T-cell (primary cell): ENCODE measurements at regions of chr20 and their contacts with region 1.

Region 1: GRCh38 chr20:36439040-36439730 is 102.1 kb upstream of the MYL9 start:
- DNase-seq: peak in 32 of 35 experiments; percentile 22 to 70 (median 46)
- ATAC-seq: peak in 2 of 4 experiments; percentile 39 to 48
- H3K4me3 ChIP-seq: no peak overlapping the region
- H3K4me3 Mint-ChIP-seq: no peak overlapping the region
- H3K27ac ChIP-seq: no peak overlapping the region
- H3K27ac Mint-ChIP-seq: no peak overlapping the region
- H3K4me1 ChIP-seq: peaks cover 0 to 20% of the 10 kb centered on the region in 2 experiments
- H3K4me1 Mint-ChIP-seq: peaks cover 0 to 4% (median 2%) of the 10 kb centered on the region in 3 donors
- H3K27me3 ChIP-seq: peaks cover 0 to 48% of the 10 kb centered on the region in 2 experiments
- H3K27me3 Mint-ChIP-seq: peaks cover 5 to 6% of the 10 kb centered on the region in 2 donors

Region 2: GRCh38 chr20:35551503-35551902 is 887.7 kb before region 1 on chr20:
- CTCF ChIA-PET with region 1: no interaction called
- POLR2A ChIA-PET with region 1: no interaction called
- DNase-seq: no peak
- ATAC-seq: no peak
- H3K4me3 ChIP-seq: no peak overlapping the region
- H3K4me3 Mint-ChIP-seq: no peak overlapping the region
- H3K27ac ChIP-seq: no peak overlapping the region
- H3K27ac Mint-ChIP-seq: no peak overlapping the region
- H3K4me1 ChIP-seq: no peaks in the 10 kb centered on the region
- H3K4me1 Mint-ChIP-seq: no peaks in the 10 kb centered on the region
- H3K27me3 ChIP-seq: no peaks in the 10 kb centered on the region
- H3K27me3 Mint-ChIP-seq: no peaks in the 10 kb centered on the region

Region 3: DNA sequence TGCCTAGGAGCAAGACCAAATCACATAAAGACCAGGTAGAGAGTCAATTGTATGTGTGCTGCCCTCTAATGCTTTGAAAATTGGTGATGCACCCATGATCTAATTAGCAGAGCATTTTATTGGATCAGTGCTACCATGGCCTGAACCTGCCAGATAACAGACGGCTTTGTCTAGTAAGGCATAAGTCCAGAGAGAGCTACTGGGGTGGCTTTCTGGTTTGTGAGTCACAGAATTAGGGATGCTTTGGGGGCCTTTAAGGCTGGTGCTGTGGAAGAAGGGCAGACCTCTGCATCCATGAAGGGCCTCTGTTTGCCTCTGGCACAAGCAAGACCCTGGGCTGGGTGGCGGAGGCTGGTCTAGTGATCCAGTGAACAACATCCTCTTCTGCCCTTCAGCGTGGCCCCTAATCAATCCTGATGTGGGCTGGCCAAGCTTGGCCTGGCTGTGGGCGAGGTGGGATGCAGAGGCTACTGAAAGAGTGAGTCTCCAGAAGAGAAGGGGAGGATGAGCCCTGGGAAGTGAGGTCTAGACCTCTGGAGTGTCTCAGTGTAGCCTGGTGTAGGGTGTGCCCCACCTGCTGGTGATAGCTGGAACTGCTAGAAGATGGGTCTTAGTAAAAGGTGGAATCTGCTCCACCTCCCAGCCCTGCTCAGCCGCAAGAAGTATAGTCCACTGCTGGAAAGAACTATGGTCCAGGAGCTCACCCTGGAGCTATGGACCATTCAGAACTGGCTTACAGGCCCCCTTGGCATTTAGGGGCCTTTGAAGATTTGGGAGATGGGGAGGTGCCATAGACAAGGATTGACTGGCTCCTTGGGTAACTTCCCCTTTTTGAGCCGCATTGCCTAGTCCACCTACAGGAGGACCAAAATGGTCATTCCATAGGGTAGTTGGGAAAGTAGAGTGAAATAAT is 239.6 kb before region 1 on chr20:
- CTCF ChIA-PET with region 1: interaction called, 9 to 13 read pairs
- POLR2A ChIA-PET with region 1: no interaction called
- DNase-seq: peak; percentile 17 to 81 (median 58)
- ATAC-seq: peak; percentile 72 to 76 (median 72)
- H3K4me3 ChIP-seq: no peak overlapping the region
- H3K4me3 Mint-ChIP-seq: no peak overlapping the region
- H3K27ac ChIP-seq: no peak overlapping the region
- H3K27ac Mint-ChIP-seq: no peak overlapping the region
- H3K4me1 ChIP-seq: peaks cover 0 to 9% of the 10 kb centered on the region in 2 experiments
- H3K4me1 Mint-ChIP-seq: peaks cover 4 to 13% (median 5%) of the 10 kb centered on the region in 3 donors
- H3K27me3 ChIP-seq: peaks cover 0 to 28% of the 10 kb centered on the region in 2 experiments
- H3K27me3 Mint-ChIP-seq: peaks cover 14 to 20% of the 10 kb centered on the region in 2 donors